ENCODE measurements at regions of chr12 and their contacts with region 1.

Region 1: GRCh38 chr12:67288561-67288960 is 19.4 kb downstream of the CAND1 start:
- DNase-seq: no peak
- ATAC-seq: peak; percentile 49; the same call in 1 of the 3 replicates
- H3K4me3 ChIP-seq: no peak overlapping the region
- H3K27ac ChIP-seq: no peak overlapping the region
- H3K4me1 ChIP-seq: no peaks in the 10 kb centered on the region
- H3K27me3 ChIP-seq: no peaks in the 10 kb centered on the region
- CTCF ChIP-seq: no peak
- EP300 ChIP-seq: no peak
- POLR2A ChIP-seq: no peak
- RAD21 ChIP-seq: no peak

Region 2: DNA sequence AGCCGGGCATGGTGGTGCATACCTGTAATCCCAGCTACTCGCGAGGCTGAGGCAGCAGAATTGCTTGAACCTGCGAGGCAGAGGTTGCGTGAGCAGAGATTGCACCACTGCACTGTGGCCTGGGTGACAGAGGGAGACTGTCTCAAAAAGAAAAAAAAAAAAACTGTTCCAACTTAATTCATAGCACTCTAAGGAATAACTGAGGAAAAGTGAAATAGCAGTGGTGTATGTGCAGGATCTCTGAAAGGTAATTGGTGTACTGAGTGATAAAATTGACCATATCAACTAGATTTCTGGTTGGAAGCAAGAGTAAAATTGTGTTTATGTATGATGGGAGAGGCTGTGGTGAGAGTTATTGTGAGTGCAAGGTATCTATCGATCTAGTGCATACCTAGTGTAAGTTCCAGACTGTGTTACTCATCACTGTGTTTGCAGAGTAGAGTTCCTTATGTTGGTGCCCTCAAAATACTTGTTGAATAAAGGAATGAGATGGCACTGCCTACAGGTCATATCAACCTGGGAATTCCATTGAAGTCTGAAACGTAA is 13.1 kb before region 1 on chr12:
- CTCF ChIA-PET with region 1: no interaction called
- POLR2A ChIA-PET with region 1: no interaction called
- in situ Hi-C with region 1: no loop called
- intact Hi-C with region 1: loop called (anchors 1 kb)
- DNase-seq: peak; percentile 46
- ATAC-seq: peak; percentile 95
- H3K4me3 ChIP-seq: no peak overlapping the region
- H3K27ac ChIP-seq: peak overlapping the region; percentile 7
- H3K4me1 ChIP-seq: peaks cover 52% of the 10 kb centered on the region
- H3K27me3 ChIP-seq: no peaks in the 10 kb centered on the region; a peak in 1 of 5 replicates
- CTCF ChIP-seq: no peak
- EP300 ChIP-seq: no peak
- POLR2A ChIP-seq: no peak
- RAD21 ChIP-seq: no peak

Region 3: GRCh38 chr12:68250454-68250853 is 961.9 kb after region 1 on chr12:
- CTCF ChIA-PET with region 1: no interaction called
- POLR2A ChIA-PET with region 1: no interaction called
- in situ Hi-C with region 1: no loop called
- intact Hi-C with region 1: no loop called
- DNase-seq: no peak
- ATAC-seq: no peak
- H3K4me3 ChIP-seq: no peak overlapping the region
- H3K27ac ChIP-seq: no peak overlapping the region
- H3K4me1 ChIP-seq: no peaks in the 10 kb centered on the region
- H3K27me3 ChIP-seq: peaks cover 0 to 13% of the 10 kb centered on the region in 2 experiments; a peak in 1 of 5 replicates
- CTCF ChIP-seq: no peak
- EP300 ChIP-seq: no peak
- POLR2A ChIP-seq: no peak
- RAD21 ChIP-seq: no peak